Astrocyte of the cerebellum (primary cell): ENCODE measurements at regions of chr12 and their contacts with region 1.

Region 1: DNA sequence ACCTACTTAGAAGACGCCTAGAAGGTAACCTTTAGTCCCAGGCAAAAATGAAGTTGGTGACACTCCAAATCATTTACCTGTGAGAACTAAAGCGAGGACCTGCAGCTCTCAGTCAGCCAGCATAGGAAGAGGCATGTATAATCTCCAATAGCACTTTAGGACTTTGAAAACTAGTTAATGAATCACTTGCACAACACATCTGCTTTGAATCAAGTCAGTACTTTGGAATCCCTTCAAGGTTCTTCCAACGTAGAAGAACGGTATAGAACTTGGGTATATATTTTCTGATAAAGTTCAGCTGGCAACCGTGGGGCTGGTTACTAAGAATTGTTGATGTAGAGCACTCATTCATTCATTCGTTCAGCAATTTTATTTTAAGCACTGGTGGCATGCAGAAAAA is 251.9 kb downstream of the TMEM132D start:
- DNase-seq: no peak
- H3K4me3 ChIP-seq: no peak overlapping the region
- CTCF ChIP-seq: no peak

Region 2: DNA sequence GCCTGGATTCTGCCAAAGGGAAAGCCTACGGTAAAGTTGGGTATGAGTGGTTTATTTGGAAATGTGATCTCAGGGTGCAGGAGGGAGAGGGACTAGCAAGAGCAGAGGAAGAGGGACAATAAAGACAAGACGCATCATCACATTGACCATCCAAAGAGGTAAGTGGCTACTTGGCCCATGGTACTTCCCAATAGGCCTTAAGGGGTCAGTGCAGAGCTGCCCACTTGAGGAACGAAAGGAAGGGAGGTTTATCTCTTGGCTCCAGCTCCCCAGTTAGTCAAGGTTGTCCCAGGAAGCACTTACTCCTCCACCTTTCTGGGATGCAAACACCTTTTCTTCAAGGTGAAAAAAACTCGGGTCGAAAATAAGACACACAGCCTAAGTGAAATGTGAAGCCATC is 72.1 kb before region 1 on chr12:
- in situ Hi-C with region 1: no loop called
- DNase-seq: no peak
- H3K4me3 ChIP-seq: no peak overlapping the region
- CTCF ChIP-seq: no peak

Region 3: GRCh38 chr12:129604506-129604905 is 47.4 kb before region 1 on chr12:
- in situ Hi-C with region 1: loop called (anchors 5 kb)
- DNase-seq: no peak
- H3K4me3 ChIP-seq: no peak overlapping the region
- CTCF ChIP-seq: no peak